Activated CD8-positive, alpha-beta T cell treated with anti-CD3 and anti-CD28 coated beads for 36 hours (primary cell): ENCODE measurements at regions of chr7 and their contacts with region 1.

Region 1: GRCh38 chr7:25557379-25557917 is 329.2 kb upstream of the NPVF start:
- DNase-seq: no peak
- ATAC-seq: no peak
- H3K4me3 Mint-ChIP-seq: no peak overlapping the region
- H3K27ac Mint-ChIP-seq: no peak overlapping the region
- H3K4me1 Mint-ChIP-seq: peaks cover 6% of the 10 kb centered on the region
- H3K27me3 Mint-ChIP-seq: no peaks in the 10 kb centered on the region
- CTCF ChIP-seq: no peak

Region 2: DNA sequence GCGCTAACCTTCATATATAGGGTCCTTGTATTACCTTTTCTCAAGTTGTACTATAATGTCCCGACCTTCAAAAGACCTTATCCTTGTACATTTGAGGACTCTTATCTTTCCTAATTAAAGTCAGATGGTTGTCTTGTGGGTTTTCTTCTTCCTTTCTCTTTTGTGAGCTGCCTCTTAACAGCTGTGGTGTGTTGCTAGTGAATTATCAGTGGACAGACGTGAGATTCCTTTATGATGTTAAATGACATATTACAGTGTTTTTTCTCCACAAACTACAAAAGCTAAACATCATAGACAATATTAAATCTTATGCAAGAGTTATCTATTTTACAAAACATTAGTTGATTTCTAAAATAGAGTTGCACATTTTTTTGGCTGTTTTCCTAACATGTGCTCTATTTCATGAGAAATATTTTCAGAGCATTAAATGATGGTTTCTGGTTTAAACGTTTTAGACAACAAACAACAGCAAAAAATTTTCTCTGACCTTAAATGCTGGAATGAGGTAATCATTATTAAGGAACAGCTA is 57.0 kb before region 1 on chr7:
- CTCF ChIA-PET with region 1: no interaction called
- POLR2A ChIA-PET with region 1: interaction called, 3 read pairs
- intact Hi-C with region 1: loop called (anchors 5 kb)
- DNase-seq: no peak
- ATAC-seq: no peak
- H3K4me3 Mint-ChIP-seq: no peak overlapping the region
- H3K27ac Mint-ChIP-seq: no peak overlapping the region
- H3K4me1 Mint-ChIP-seq: peaks cover 8% of the 10 kb centered on the region
- H3K27me3 Mint-ChIP-seq: no peaks in the 10 kb centered on the region
- CTCF ChIP-seq: no peak

Region 3: DNA sequence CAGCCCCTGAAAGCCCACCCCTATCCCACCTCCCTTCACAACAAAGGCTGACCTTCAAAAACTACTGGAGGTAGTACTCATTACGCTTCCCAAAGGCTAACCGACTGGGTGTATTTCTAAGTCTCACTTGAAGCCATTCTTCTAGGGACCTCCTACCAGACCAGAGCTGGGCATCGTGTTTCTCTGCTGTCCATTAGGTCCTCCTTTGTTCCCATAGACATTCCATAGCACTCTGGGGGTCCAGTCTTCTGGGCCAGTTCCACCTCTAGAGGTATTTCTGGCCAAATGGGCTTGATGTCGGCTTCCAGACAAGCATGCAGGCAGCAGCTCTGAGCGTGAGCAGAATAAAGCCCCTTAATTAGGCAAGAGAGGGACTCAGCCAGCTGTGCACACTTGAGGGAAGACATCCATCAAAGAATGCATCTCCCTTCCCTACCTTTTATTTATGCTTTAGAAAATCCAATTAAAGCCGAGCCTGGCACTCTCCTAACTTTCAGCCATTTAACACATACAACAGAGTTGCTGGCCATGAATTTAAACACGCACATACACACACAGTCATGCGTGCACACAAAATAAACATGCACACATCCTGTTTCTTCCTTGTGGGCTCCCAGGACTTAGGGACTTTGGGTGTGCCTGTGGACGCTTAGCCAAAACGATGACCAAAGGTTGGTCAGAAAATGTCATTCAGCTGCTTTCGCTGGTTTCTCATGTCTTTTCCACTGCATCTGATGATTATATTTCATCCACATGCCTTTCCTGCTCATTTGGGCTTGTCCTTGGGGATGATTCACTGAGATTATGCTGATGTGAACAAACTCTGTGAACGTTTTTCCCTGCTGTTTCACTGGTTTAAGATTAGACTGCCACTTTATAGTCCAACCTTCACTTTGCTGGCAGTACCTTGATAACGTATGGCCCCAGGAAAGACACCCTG is 232.5 kb after region 1 on chr7:
- CTCF ChIA-PET with region 1: no interaction called
- POLR2A ChIA-PET with region 1: no interaction called
- intact Hi-C with region 1: no loop called
- DNase-seq: no peak
- ATAC-seq: no peak
- H3K4me3 Mint-ChIP-seq: no peak overlapping the region
- H3K27ac Mint-ChIP-seq: no peak overlapping the region
- H3K4me1 Mint-ChIP-seq: no peaks in the 10 kb centered on the region
- H3K27me3 Mint-ChIP-seq: peaks cover 9% of the 10 kb centered on the region
- CTCF ChIP-seq: no peak